CD14-positive monocyte (primary cell): ENCODE measurements at regions of chr17 and their contacts with region 1.

Region 1: GRCh38 chr17:74961657-74962490 is 10.7 kb downstream of the HID1 start:
- DNase-seq: peak; percentile 75 to 82 (median 77)
- H3K4me3 ChIP-seq: no peak overlapping the region
- H3K4me3 Mint-ChIP-seq: no peak overlapping the region
- H3K27ac ChIP-seq: no peak overlapping the region
- H3K27ac Mint-ChIP-seq: peak overlapping the region in 1 of 7 donors; percentile 53
- H3K4me1 ChIP-seq: peaks cover 0 to 6% of the 10 kb centered on the region in 2 donors
- H3K4me1 Mint-ChIP-seq: peaks cover 7% of the 10 kb centered on the region
- H3K27me3 ChIP-seq: peaks cover 0 to 2% of the 10 kb centered on the region in 2 donors
- H3K27me3 Mint-ChIP-seq: peaks cover 8 to 42% (median 11%) of the 10 kb centered on the region in 3 donors
- CTCF ChIP-seq: peak; percentile 85

Region 2: GRCh38 chr17:74748529-74749365 is 213.1 kb before region 1 on chr17 and contains the start of gene NHERF1:
- intact Hi-C with region 1: loop called in 1 of 2 experiments (anchors 10 kb)
- DNase-seq: peak; percentile 89 to 91 (median 90)
- H3K4me3 ChIP-seq: peak within 1 kb of the TSS; percentile 91 to 98 (median 97)
- H3K4me3 Mint-ChIP-seq: peak within 1 kb of the TSS; percentile 99 to 100
- H3K27ac ChIP-seq: peak within 1 kb of the TSS; percentile 18 to 87
- H3K27ac Mint-ChIP-seq: peak within 1 kb of the TSS; percentile 80 to 94 (median 86)
- H3K4me1 ChIP-seq: peaks cover 70 to 86% of the 10 kb centered on the region in 2 donors
- H3K4me1 Mint-ChIP-seq: peaks cover 73% of the 10 kb centered on the region
- H3K27me3 ChIP-seq: no peaks in the 10 kb centered on the region
- H3K27me3 Mint-ChIP-seq: no peaks in the 10 kb centered on the region
- CTCF ChIP-seq: no peak
- polyA plus RNA-seq, gene NHERF1: 79.5 to 149 (median 131) TPM

Region 3: DNA sequence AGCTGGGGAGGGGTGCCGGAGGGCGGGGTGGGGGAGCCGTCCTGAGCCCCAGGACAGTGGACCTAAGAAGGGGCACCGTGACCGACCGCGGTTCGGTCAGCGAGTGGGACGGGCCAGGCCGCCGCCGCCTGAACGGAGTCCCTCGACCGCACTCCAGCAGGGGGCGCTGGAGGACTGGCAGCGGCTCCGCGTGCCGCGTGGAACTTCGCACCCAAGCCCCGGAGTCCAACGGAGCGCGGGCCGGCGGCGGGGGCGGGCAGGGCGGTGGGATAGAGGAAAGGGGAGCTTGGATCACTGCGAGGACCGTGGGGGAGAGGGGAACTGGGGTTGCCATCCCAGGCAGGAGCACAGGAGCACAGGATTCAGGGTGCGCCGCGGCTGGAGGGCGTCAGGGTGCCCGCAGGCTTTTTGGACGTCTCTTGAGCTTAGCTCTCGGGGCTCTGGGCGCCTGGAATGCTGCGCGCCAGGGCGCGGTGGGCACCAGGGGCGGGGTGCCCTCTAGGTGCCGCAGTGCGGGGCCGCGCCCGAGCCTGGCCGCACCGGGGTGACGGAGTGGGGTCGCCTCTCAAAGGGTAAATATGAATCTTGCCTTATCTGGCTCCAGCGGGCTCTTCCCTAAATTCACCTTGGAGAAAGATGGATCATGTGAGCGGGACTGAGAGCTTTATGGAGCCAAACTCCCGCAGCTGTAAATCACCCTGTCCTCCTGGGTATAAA is 38.2 kb before region 1 on chr17:
- intact Hi-C with region 1: loop called (anchors 2 kb)
- DNase-seq: peak; percentile 67 to 76 (median 68)
- H3K4me3 ChIP-seq: peak overlapping the region; percentile 8 to 75 (median 33)
- H3K4me3 Mint-ChIP-seq: peak overlapping the region; percentile 71 to 84
- H3K27ac ChIP-seq: no peak overlapping the region
- H3K27ac Mint-ChIP-seq: peak overlapping the region in 2 of 7 donors; percentile 55 to 64
- H3K4me1 ChIP-seq: peaks cover 29 to 45% of the 10 kb centered on the region in 2 donors
- H3K4me1 Mint-ChIP-seq: peaks cover 33% of the 10 kb centered on the region
- H3K27me3 ChIP-seq: peaks cover 27 to 68% of the 10 kb centered on the region in 2 donors
- H3K27me3 Mint-ChIP-seq: peaks cover 64 to 84% (median 68%) of the 10 kb centered on the region in 3 donors
- CTCF ChIP-seq: peak; percentile 98

Region 4: GRCh38 chr17:75006653-75007052 is 44.8 kb after region 1 on chr17:
- intact Hi-C with region 1: loop called (anchors 5 kb)
- DNase-seq: peak in 2 of 3 donors; percentile 19 to 38
- H3K4me3 ChIP-seq: no peak overlapping the region
- H3K4me3 Mint-ChIP-seq: no peak overlapping the region
- H3K27ac ChIP-seq: no peak overlapping the region
- H3K27ac Mint-ChIP-seq: no peak overlapping the region
- H3K4me1 ChIP-seq: no peaks in the 10 kb centered on the region
- H3K4me1 Mint-ChIP-seq: peaks cover 5% of the 10 kb centered on the region
- H3K27me3 ChIP-seq: no peaks in the 10 kb centered on the region
- H3K27me3 Mint-ChIP-seq: peaks cover 1 to 10% (median 4%) of the 10 kb centered on the region in 3 donors
- CTCF ChIP-seq: no peak

Region 5: DNA sequence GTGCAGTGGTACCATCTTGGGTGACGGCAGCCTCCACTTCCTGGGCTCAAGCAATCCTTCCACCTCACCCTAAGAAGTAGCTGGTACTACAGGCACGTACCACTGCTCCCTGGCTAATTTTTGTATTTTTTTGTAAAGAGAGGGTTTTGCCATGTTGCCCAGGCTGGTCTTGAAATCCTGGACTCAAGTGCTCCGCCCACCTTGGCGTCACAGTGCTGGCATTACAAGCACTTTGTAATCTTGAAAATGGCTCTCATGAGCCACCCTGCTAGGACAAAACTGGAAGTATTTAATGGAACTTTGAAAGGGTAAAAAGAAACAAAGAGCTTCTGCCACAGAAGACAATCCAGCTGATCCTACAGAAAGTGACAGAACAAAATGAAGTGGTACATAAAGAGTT is 211.7 kb after region 1 on chr17:
- intact Hi-C with region 1: loop called in 1 of 2 experiments (anchors 10 kb)
- DNase-seq: no peak
- H3K4me3 ChIP-seq: no peak overlapping the region
- H3K4me3 Mint-ChIP-seq: no peak overlapping the region
- H3K27ac ChIP-seq: no peak overlapping the region
- H3K27ac Mint-ChIP-seq: peak overlapping the region in 2 of 7 donors; percentile 40 to 58
- H3K4me1 ChIP-seq: no peaks in the 10 kb centered on the region
- H3K4me1 Mint-ChIP-seq: peaks cover 2% of the 10 kb centered on the region
- H3K27me3 ChIP-seq: no peaks in the 10 kb centered on the region
- H3K27me3 Mint-ChIP-seq: no peaks in the 10 kb centered on the region
- CTCF ChIP-seq: no peak

Region 6: DNA sequence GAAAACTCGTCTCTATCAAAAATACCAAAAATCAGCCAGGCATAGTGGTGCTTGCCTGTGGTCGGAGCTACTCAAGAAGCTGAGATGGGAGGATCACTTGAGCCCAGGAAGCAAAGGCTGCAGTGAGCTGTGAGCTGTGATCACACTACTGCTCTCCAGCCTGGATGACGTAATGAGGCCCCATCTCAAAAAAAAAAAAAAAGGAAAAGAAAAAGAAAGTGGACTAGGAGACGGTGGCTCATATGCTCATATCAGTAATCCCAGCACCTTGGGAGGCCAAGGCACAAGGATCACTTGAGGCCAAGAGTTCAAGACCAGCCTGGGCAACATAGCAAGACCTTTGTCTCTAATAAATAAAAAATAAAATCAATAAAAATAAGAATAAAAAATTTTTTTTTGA is 229.7 kb after region 1 on chr17:
- intact Hi-C with region 1: loop called in 1 of 2 experiments (anchors 5 kb)
- DNase-seq: peak in 2 of 3 donors; percentile 15 to 20
- H3K4me3 ChIP-seq: no peak overlapping the region
- H3K4me3 Mint-ChIP-seq: no peak overlapping the region
- H3K27ac ChIP-seq: no peak overlapping the region
- H3K27ac Mint-ChIP-seq: no peak overlapping the region
- H3K4me1 ChIP-seq: no peaks in the 10 kb centered on the region
- H3K4me1 Mint-ChIP-seq: peaks cover 9% of the 10 kb centered on the region
- H3K27me3 ChIP-seq: no peaks in the 10 kb centered on the region
- H3K27me3 Mint-ChIP-seq: peaks cover 2 to 3% (median 2%) of the 10 kb centered on the region in 3 donors
- CTCF ChIP-seq: no peak